ENCODE measurements at regions of chr15 and their contacts with region 1.

Region 1: GRCh38 chr15:78108299-78109084 is 16.1 kb downstream of the SH2D7 start:
- DNase-seq: peak; percentile 92
- ATAC-seq: peak; percentile 78
- H3K4me3 Mint-ChIP-seq: no peak overlapping the region
- H3K27ac Mint-ChIP-seq: peak overlapping the region; percentile 74
- H3K4me1 Mint-ChIP-seq: peaks cover 60% of the 10 kb centered on the region
- H3K27me3 Mint-ChIP-seq: no peaks in the 10 kb centered on the region

Region 2: GRCh38 chr15:77784395-77785292 is 323.8 kb before region 1 on chr15:
- CTCF ChIA-PET with region 1: no interaction called
- POLR2A ChIA-PET with region 1: no interaction called
- DNase-seq: no peak
- ATAC-seq: no peak
- H3K4me3 Mint-ChIP-seq: no peak overlapping the region
- H3K27ac Mint-ChIP-seq: no peak overlapping the region
- H3K4me1 Mint-ChIP-seq: no peaks in the 10 kb centered on the region
- H3K27me3 Mint-ChIP-seq: no peaks in the 10 kb centered on the region

Region 3: GRCh38 chr15:77870195-77871065 is 238.1 kb before region 1 on chr15:
- CTCF ChIA-PET with region 1: no interaction called
- POLR2A ChIA-PET with region 1: no interaction called
- DNase-seq: peak; percentile 62
- ATAC-seq: no peak
- H3K4me3 Mint-ChIP-seq: no peak overlapping the region
- H3K27ac Mint-ChIP-seq: no peak overlapping the region
- H3K4me1 Mint-ChIP-seq: no peaks in the 10 kb centered on the region
- H3K27me3 Mint-ChIP-seq: peaks cover 2% of the 10 kb centered on the region

Region 4: GRCh38 chr15:77966540-77967290 is 141.8 kb before region 1 on chr15:
- CTCF ChIA-PET with region 1: interaction called, 133 read pairs
- POLR2A ChIA-PET with region 1: no interaction called
- DNase-seq: peak; percentile 66
- ATAC-seq: peak; percentile 49
- H3K4me3 Mint-ChIP-seq: no peak overlapping the region
- H3K27ac Mint-ChIP-seq: no peak overlapping the region
- H3K4me1 Mint-ChIP-seq: peaks cover 17% of the 10 kb centered on the region
- H3K27me3 Mint-ChIP-seq: peaks cover 28% of the 10 kb centered on the region

Region 5: GRCh38 chr15:78018946-78019644 is 89.4 kb before region 1 on chr15:
- CTCF ChIA-PET with region 1: interaction called, 83 read pairs
- POLR2A ChIA-PET with region 1: no interaction called
- DNase-seq: peak; percentile 60
- ATAC-seq: peak; percentile 88
- H3K4me3 Mint-ChIP-seq: peak overlapping the region; percentile 22
- H3K27ac Mint-ChIP-seq: peak overlapping the region; percentile 75
- H3K4me1 Mint-ChIP-seq: peaks cover 34% of the 10 kb centered on the region
- H3K27me3 Mint-ChIP-seq: no peaks in the 10 kb centered on the region

Region 6: GRCh38 chr15:78049691-78050440 is 58.6 kb before region 1 on chr15:
- CTCF ChIA-PET with region 1: interaction called, 60 read pairs
- POLR2A ChIA-PET with region 1: interaction called, 14 read pairs
- DNase-seq: peak; percentile 80
- ATAC-seq: peak; percentile 80
- H3K4me3 Mint-ChIP-seq: peak overlapping the region; percentile 60
- H3K27ac Mint-ChIP-seq: peak overlapping the region; percentile 94
- H3K4me1 Mint-ChIP-seq: peaks cover 94% of the 10 kb centered on the region
- H3K27me3 Mint-ChIP-seq: no peaks in the 10 kb centered on the region

Region 7: GRCh38 chr15:78077058-78077877 is 31.2 kb before region 1 on chr15 and contains the start of gene TBC1D2B:
- CTCF ChIA-PET with region 1: interaction called, 103 read pairs
- POLR2A ChIA-PET with region 1: interaction called, 5 read pairs
- DNase-seq: peak; percentile 69
- ATAC-seq: peak; percentile 83
- H3K4me3 Mint-ChIP-seq: peak within 1 kb of the TSS; percentile 100
- H3K27ac Mint-ChIP-seq: peak within 1 kb of the TSS; percentile 94
- H3K4me1 Mint-ChIP-seq: peaks cover 50% of the 10 kb centered on the region
- H3K27me3 Mint-ChIP-seq: no peaks in the 10 kb centered on the region
- total RNA-seq, gene TBC1D2B: 109 to 119 TPM

Region 8: GRCh38 chr15:78120523-78120922 is 12.0 kb after region 1 on chr15:
- CTCF ChIA-PET with region 1: interaction called, 15 read pairs
- POLR2A ChIA-PET with region 1: interaction called, 4 read pairs
- DNase-seq: no peak
- ATAC-seq: no peak
- H3K4me3 Mint-ChIP-seq: no peak overlapping the region
- H3K27ac Mint-ChIP-seq: no peak overlapping the region
- H3K4me1 Mint-ChIP-seq: no peaks in the 10 kb centered on the region
- H3K27me3 Mint-ChIP-seq: no peaks in the 10 kb centered on the region

Region 9: GRCh38 chr15:78148392-78149067 is 40.0 kb after region 1 on chr15:
- CTCF ChIA-PET with region 1: no interaction called
- POLR2A ChIA-PET with region 1: no interaction called
- DNase-seq: no peak
- ATAC-seq: peak; percentile 7
- H3K4me3 Mint-ChIP-seq: peak overlapping the region; percentile 94
- H3K27ac Mint-ChIP-seq: peak overlapping the region; percentile 92
- H3K4me1 Mint-ChIP-seq: peaks cover 48% of the 10 kb centered on the region
- H3K27me3 Mint-ChIP-seq: no peaks in the 10 kb centered on the region

Region 10: DNA sequence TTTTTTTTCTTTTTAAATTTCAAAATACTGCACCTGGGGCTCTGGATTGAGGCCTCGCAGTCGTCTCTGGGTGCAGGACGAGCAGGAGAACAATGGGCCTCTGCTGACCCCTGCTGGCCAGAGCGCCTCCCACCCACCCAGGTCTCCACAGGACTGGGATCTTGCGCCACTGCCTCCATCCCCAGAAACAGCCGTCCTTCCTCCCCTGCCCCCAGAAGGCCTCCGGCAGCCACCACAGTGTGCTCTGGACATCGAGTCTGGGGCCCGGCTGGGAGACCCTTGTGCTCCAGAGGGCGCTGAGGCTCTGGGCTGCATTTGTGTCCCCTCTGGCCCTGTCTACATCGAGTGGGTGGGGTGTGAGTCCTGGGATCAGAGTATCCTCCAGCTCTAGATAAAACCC is 132.5 kb after region 1 on chr15:
- CTCF ChIA-PET with region 1: interaction called, 107 read pairs
- POLR2A ChIA-PET with region 1: interaction called, 3 read pairs
- DNase-seq: peak; percentile 89
- ATAC-seq: peak; percentile 93
- H3K4me3 Mint-ChIP-seq: no peak overlapping the region
- H3K27ac Mint-ChIP-seq: no peak overlapping the region
- H3K4me1 Mint-ChIP-seq: peaks cover 6% of the 10 kb centered on the region
- H3K27me3 Mint-ChIP-seq: peaks cover 2% of the 10 kb centered on the region